Activated naive CD4-positive, alpha-beta T cell treated with anti-CD3 and anti-CD28 coated beads for 36 hours (primary cell): ENCODE measurements at regions of chr5 and their contacts with region 1.

Region 1: DNA sequence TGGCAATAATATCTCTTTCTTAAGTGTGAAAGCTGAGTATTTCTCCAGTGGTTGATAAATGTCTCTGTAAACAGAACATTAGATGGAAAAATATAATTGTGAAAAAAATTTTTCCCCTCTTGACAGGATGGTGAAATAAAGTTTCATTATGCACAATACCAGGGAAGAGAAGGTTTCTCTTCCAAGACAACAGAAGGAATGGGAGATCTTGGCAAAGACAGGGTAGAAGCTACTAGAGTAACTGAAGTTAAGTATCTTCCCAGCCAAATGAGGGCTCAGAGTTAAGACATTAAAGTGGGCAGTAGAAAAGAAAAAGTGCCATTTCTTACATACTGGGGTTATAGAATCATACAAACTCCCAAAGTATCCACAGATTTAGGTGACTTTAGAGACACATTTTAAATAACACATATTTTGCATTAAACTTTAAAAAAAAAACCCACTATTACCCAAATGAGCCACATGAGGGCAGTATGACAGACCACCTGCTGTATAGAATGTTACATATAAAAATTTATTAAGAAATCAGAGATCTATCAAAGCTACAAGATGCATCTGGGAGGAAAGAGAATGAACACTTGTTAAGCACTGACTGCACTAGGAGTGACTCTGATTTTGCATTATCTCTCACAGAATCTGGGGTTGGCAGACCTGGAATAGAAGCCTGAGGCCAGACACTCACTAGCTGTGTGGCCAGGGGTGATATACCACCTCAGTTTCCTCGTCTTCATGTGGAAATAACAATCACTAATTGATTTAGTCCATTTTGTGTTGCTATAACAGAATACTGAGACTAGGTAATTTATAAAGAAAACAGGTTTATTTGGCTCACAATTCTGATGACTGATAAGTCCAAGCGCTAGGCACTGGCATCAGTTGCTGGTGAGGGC is 98.5 kb downstream of the ARSB start:
- DNase-seq: no peak
- H3K4me3 Mint-ChIP-seq: no peak overlapping the region
- H3K27ac Mint-ChIP-seq: no peak overlapping the region
- H3K4me1 Mint-ChIP-seq: peaks cover 13% of the 10 kb centered on the region
- H3K27me3 Mint-ChIP-seq: no peaks in the 10 kb centered on the region

Region 2: GRCh38 chr5:79109527-79110492 is 223.2 kb after region 1 on chr5:
- CTCF ChIA-PET with region 1: no interaction called
- intact Hi-C with region 1: loop called (anchors 5 kb)
- DNase-seq: peak; percentile 63
- H3K4me3 Mint-ChIP-seq: no peak overlapping the region
- H3K27ac Mint-ChIP-seq: no peak overlapping the region
- H3K4me1 Mint-ChIP-seq: peaks cover 4% of the 10 kb centered on the region
- H3K27me3 Mint-ChIP-seq: peaks cover 46% of the 10 kb centered on the region